Spleen (tissue), 13 donors: ENCODE measurements at regions of chr20 and their contacts with region 1.

Region 1: DNA sequence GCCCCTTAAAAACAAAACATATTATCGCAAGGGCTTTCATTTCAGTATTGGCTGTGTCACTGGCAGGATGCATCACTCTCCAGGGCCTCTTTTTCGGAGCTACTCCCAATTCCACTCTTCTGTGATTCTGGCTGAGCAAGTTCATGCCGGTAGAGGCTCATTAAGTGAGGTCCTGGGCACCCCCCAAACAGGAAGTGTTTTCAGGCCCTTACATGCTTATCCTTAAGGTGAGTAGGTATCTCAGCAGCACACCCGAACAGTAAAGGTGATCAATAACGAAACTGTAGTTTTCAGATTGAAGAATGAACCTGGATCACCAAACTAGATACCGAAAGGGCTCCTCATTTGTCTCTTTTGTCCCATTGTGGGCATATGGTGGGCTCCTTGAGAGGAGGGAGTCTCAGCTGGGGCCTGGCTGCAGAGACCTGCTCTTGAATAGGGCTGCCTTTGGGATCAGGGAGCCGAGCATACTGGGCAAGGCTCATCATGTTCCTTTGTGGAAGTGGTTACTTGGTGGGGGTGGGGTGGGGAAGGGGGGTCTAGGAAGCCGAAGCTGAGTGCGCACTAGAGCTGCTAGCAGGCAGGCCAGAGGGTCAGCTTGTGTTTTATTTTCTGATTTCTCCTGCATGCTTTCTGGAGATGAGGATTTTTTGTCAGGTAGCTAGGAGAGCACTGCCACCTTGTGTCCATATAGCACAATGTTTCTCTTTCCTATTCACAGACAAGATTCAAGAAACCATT is 65.2 kb downstream of the CDS2 start:
- DNase-seq: no peak
- H3K4me3 ChIP-seq: no peak overlapping the region
- H3K27ac ChIP-seq: peak overlapping the region in 6 of 8 donors; percentile 9 to 71 (median 58)
- H3K4me1 ChIP-seq: peaks cover 0 to 14% (median 10%) of the 10 kb centered on the region in 6 donors
- H3K27me3 ChIP-seq: no peaks in the 10 kb centered on the region
- CTCF ChIP-seq: peak; percentile 61 to 89 (median 80)
- POLR2A ChIP-seq: no peak

Region 2: GRCh38 chr20:5126512-5127203 is 65.3 kb before region 1 on chr20 and contains the start of gene CDS2:
- intact Hi-C with region 1: loop called (anchors 5 kb)
- DNase-seq: peak; percentile 100
- H3K4me3 ChIP-seq: peak within 1 kb of the TSS; percentile 52 to 97 (median 76)
- H3K27ac ChIP-seq: peak within 1 kb of the TSS; percentile 77 to 99 (median 96)
- H3K4me1 ChIP-seq: peaks cover 16 to 70% (median 36%) of the 10 kb centered on the region in 6 donors
- H3K27me3 ChIP-seq: no peaks in the 10 kb centered on the region
- CTCF ChIP-seq: peak; percentile 48 to 90 (median 74)
- POLR2A ChIP-seq: peak in 1 of 3 donors; percentile 85
- total RNA-seq, gene CDS2: 33.1 to 61.8 (median 45.5) TPM